ENCODE measurements at regions of chr12 and their contacts with region 1.

Region 1: GRCh38 chr12:133080368-133081158 is at the start of gene ZNF140:
- DNase-seq: peak; percentile 97 to 98
- ATAC-seq: peak; percentile 96
- H3K4me3 ChIP-seq: peak within 1 kb of the TSS; percentile 51 to 73
- H3K27ac ChIP-seq: peak within 1 kb of the TSS; percentile 53 to 67
- H3K4me1 ChIP-seq: no peaks in the 10 kb centered on the region
- H3K27me3 ChIP-seq: no peaks in the 10 kb centered on the region
- total RNA-seq, gene ZNF140: 13.2 to 18.0 TPM

Region 2: GRCh38 chr12:132986001-132986912 is 94.3 kb before region 1 on chr12 and contains the start of gene ZNF26:
- intact Hi-C with region 1: loop called in 1 of 2 experiments (anchors 2 kb)
- DNase-seq: peak; percentile 94 to 96
- ATAC-seq: peak; percentile 100
- H3K4me3 ChIP-seq: peak within 1 kb of the TSS; percentile 52 to 91
- H3K27ac ChIP-seq: peak within 1 kb of the TSS in 1 of 2 donors; percentile 65
- H3K4me1 ChIP-seq: peaks cover 0 to 5% of the 10 kb centered on the region in 2 donors
- H3K27me3 ChIP-seq: no peaks in the 10 kb centered on the region
- total RNA-seq, gene ZNF26: 10.5 to 16.7 TPM

Region 3: DNA sequence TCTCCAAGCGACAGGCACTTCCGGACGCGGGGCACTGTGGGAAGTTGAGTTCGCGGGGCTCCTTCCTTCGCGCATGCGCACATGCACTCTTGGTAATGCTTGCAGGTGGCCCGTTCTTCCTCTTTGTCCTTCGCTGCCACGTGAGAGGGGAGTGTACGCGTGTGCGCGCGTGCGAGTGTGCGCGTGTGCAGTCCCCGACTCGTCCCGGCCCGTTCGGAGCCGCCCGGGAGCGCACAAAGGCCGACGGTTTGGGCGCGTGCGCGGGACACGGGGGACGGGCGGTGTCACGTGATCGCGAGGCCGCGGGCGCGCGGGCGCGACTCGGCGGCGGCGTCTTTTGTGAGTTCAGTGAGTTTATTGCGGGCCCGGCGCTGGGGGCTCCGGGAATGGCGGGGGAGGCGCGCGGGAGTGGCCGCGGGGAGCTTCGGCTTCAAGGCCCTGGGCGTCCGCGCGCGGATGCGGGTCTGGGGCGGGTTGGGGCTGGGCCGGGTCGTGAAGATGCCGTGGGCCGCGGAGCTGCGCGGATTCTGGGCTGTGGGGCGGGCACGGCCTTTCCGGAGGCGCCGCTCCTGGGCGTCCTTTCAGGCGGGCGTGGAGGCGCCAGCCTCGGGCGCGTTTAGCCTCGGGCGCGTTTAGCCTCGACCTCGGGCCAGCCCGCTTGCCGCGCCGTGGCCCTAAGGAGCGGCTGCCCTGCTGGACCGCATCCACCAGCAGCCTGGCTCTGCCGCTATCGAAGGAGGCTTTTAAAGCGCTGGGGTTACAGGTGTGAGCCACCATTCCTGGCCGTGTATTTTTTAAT is 43.2 kb before region 1 on chr12 and contains the start of gene ZNF84:
- intact Hi-C with region 1: loop called (anchors 2 to 5 kb)
- DNase-seq: peak; percentile 98
- ATAC-seq: peak; percentile 99
- H3K4me3 ChIP-seq: peak within 1 kb of the TSS; percentile 50 to 88
- H3K27ac ChIP-seq: peak within 1 kb of the TSS in 1 of 2 donors; percentile 85
- H3K4me1 ChIP-seq: no peaks in the 10 kb centered on the region
- H3K27me3 ChIP-seq: no peaks in the 10 kb centered on the region
- total RNA-seq, gene ZNF84: 23.3 to 32.1 TPM

Region 4: DNA sequence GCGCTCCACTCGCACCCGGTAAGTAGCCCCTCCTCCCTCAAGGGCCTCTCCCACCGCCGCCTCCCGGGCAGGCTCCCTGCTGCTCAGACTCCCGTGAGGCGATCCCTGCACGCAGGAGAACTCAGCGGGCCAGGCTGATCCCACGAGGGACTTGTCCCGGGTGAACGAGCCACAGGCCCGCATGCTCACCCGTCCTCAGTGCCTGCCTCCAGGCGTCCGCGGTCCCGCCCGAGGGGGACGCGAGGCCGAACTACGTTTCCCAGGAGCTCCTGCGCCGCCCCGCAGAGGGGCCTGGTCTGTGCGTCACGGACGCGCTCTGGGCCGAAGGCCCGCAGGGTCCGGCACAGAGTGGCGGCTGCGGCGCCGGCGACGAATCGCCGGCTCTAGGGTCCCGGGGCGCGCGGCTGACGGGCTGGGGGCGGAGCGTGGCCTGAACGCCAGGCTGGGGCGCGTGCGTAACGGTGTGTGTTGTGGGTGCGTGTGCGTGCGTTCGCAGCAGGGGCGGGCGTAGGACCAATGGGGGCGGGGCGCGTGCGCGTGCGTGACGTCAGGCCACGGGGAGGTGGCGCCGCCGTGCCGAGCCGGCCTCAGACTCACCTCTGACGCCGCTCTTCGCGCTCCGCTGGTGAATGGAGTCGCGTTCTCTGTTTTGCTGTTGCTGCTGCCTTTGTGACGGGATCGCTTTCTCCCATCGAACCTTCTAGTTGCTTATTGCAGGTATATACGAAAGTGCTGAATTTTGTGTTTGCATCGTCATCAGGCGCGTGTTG is 49.7 kb after region 1 on chr12 and contains the starts of genes ZNF10 and ZNF891:
- intact Hi-C with region 1: loop called in 1 of 2 experiments (anchors 1 kb)
- DNase-seq: peak; percentile 97 to 99
- ATAC-seq: peak; percentile 98
- H3K4me3 ChIP-seq: peak within 1 kb of the TSS; percentile 83 to 87
- H3K27ac ChIP-seq: peak within 1 kb of the TSS; percentile 47 to 80
- H3K4me1 ChIP-seq: peaks cover 0 to 2% of the 10 kb centered on the region in 2 donors
- H3K27me3 ChIP-seq: no peaks in the 10 kb centered on the region
- total RNA-seq, gene ZNF10: 14.8 to 16.2 TPM
- total RNA-seq, gene ZNF891: 3.5 to 4.9 TPM

Region 5: GRCh38 chr12:133181238-133181959 is 100.8 kb after region 1 on chr12 and contains the start of gene ZNF268:
- intact Hi-C with region 1: loop called in 1 of 2 experiments (anchors 1 kb)
- DNase-seq: peak; percentile 94 to 97
- ATAC-seq: peak; percentile 98
- H3K4me3 ChIP-seq: peak within 1 kb of the TSS; percentile 11 to 95
- H3K27ac ChIP-seq: no peak within 1 kb of the TSS
- H3K4me1 ChIP-seq: no peaks in the 10 kb centered on the region
- H3K27me3 ChIP-seq: no peaks in the 10 kb centered on the region
- total RNA-seq, gene ZNF268: 15.7 to 18.9 TPM

Measured in aorta (tissue), 5 donors.